ENCODE measurements at regions of chr10 and their contacts with region 1.

Region 1: DNA sequence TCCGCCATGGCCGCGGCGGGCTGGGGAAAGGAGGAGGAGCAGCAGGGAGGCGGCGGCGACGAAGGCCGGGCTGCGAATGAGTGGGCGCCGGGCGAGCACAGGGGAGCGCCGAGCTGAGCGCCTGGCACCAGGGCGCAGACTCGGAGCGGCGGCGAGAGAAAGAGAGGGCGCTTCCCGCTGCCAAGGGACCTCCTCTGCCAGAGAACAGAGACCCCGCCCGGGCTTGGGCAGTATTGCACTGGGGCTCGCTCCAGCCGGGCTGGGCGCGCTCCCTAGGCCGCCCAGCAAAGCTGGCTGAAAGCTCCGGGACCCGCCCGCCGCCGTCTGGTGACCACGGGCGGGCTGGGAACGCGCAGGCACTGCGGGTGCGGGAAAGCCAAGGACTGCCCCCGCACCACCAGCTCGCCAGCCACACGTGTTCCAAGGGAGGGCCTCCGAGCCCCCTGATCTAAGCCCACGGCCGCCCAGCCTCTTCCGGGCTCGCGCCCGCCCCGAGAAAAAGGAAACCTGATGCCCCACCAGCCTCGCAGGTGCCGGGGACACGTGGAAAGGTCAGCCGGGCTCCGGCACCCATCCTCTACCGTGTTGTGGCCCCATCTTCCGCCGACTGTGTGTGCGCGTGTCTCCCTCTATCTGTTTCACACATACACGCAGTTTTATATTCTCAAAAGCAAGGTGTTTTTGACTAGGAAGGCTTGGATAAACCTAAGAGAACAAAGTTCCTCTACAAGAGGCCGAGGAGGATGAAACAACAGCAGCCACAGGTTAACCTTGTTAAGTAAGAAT is at the start of gene CCDC6:
- DNase-seq: peak; percentile 49
- H3K4me3 ChIP-seq: peak within 1 kb of the TSS; percentile 91
- CTCF ChIP-seq: peak; percentile 88

Region 2: GRCh38 chr10:59872892-59873463 is 33.6 kb before region 1 on chr10:
- CTCF ChIA-PET with region 1: interaction called, 11 read pairs
- POLR2A ChIA-PET with region 1: interaction called, 4 read pairs
- DNase-seq: peak; percentile 78
- H3K4me3 ChIP-seq: peak overlapping the region; percentile 16; the same call in 1 of the 2 replicates
- CTCF ChIP-seq: no peak

Region 3: DNA sequence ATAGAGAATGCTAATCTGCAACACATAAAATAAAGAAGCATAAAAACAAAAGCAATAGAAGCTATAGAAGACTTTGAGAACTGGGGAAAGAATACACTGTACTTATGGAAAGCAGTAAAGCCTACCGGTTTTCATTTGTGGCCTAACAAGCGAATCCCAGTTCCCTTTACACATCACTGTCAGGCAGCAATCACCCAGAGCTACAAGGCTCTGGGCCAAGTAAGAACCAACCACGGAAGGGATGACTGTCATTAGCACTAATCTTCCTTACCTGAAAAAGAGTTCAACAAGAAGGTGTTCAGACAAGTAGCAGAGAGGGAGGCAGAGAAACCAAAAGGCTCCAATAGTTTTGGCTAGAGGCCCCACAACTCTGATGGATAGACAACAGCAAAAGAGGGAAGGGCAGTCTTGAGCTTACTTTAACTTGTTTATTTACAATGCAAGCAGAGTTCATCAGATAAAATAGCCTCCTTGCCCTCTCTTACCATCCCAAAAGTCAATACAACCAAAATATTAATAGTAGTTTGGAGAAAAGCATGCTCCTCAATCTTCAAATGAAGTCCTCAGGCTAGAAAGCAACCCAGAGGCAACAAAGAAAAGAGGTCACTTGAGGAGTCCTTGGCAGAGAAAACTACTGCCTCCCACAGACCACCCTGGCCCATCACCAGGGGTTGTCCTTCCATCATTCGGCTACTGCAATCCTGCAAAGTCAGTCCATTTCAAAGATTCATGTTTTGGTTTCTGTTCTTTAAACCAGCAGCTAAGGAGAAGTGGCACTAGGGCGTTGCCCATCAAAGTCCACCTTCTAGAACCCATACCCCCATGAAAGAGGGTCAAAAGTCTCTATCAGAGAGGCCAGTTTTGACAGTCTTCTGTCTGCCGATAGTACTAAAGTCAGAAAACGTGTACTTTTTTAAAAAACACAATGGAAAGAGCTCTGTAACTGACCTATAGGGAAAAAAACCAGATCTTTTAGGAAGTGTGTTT is 15.0 kb before region 1 on chr10:
- CTCF ChIA-PET with region 1: interaction called, 11 read pairs
- POLR2A ChIA-PET with region 1: interaction called, 3 read pairs
- DNase-seq: no peak
- H3K4me3 ChIP-seq: no peak overlapping the region
- CTCF ChIP-seq: no peak

Region 4: DNA sequence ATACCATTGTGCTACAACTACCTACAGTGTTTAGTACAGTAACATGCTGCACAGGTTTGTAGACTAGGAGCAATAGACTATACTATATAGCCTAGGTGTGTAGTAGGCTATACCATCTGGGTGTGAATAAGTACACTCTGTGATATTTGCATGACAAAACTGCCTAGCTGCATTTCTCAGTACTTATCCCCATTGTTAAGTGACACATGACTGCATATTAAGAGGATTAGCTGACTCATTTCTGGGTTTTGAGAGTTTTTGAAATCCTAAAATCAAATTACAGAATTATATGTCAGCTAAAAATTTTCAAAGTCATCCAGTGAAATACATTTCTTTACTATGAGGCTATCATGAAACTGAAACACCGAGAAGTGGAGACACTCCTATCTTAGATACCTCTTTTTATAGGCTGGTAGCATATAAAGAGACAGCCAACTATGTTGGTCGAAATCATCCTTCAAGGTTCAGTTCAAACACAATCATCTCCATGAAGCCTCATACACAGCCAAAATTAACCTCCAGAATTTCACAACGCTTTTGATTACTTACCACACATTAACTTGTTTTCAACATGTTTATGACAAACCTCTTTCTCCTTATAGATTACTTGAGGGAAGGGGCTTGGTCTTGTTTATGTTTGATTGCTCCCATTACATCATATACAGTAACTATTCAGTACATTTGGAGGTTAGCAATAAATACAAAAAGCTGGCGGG is 572.9 kb after region 1 on chr10:
- CTCF ChIA-PET with region 1: no interaction called
- POLR2A ChIA-PET with region 1: no interaction called
- DNase-seq: no peak
- H3K4me3 ChIP-seq: no peak overlapping the region
- CTCF ChIP-seq: no peak